ENCODE measurements at regions of chr11 and their contacts with region 1.

Region 1: GRCh38 chr11:103682318-103683184 is 353.9 kb upstream of the DDI1 start:
- DNase-seq: peak; percentile 82
- H3K4me3 ChIP-seq: no peak overlapping the region
- H3K27ac ChIP-seq: peak overlapping the region in 1 of 4 donors; percentile 29
- H3K4me1 ChIP-seq: peaks cover 0 to 14% (median 8%) of the 10 kb centered on the region in 4 donors
- H3K27me3 ChIP-seq: no peaks in the 10 kb centered on the region
- CTCF ChIP-seq: peak; percentile 61 to 90 (median 82)
- EP300 ChIP-seq: no peak
- POLR2A ChIP-seq: no peak

Region 2: DNA sequence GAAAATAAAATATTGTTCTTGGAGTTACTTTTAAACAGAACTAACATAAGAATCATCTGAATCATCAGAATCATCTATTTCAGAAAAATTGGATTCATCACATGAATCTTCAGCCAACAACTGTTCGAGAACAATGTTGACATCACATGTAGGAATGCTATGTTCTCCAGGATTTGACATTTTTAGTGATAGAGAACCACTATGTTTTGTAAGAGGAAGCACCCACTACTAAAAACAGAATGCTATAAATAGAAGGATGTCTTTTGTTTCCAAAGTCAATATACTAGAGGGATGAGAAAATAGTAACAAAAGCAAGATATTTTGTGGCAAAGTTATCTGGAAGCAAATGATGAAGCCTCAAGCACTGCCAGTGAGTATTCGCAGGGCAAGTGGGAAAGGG is 90.5 kb after region 1 on chr11:
- intact Hi-C with region 1: loop called (anchors 5 kb)
- DNase-seq: no peak
- H3K4me3 ChIP-seq: no peak overlapping the region
- H3K27ac ChIP-seq: no peak overlapping the region
- H3K4me1 ChIP-seq: no peaks in the 10 kb centered on the region
- H3K27me3 ChIP-seq: no peaks in the 10 kb centered on the region
- CTCF ChIP-seq: no peak
- EP300 ChIP-seq: peak in 1 of 4 donors; percentile 25
- POLR2A ChIP-seq: no peak

Region 3: GRCh38 chr11:104164028-104164520 is 481.5 kb after region 1 on chr11 and contains the start of gene PDGFD:
- intact Hi-C with region 1: loop called (anchors 5 kb)
- DNase-seq: peak; percentile 72
- H3K4me3 ChIP-seq: peak within 1 kb of the TSS; percentile 14 to 50 (median 38)
- H3K27ac ChIP-seq: peak within 1 kb of the TSS in 1 of 4 donors; percentile 7
- H3K4me1 ChIP-seq: peaks cover 0 to 13% (median 9%) of the 10 kb centered on the region in 4 donors
- H3K27me3 ChIP-seq: peaks cover 0 to 6% (median 0%) of the 10 kb centered on the region in 3 donors
- CTCF ChIP-seq: no peak
- EP300 ChIP-seq: no peak
- POLR2A ChIP-seq: no peak
- total RNA-seq, gene PDGFD: 7.9 to 11.6 (median 10.2) TPM

Measured in sigmoid colon (tissue), 7 donors.